ENCODE measurements at regions of chr22 and their contacts with region 1.

Region 1: GRCh38 chr22:28930357-28931007 is 47.1 kb downstream of the ZNRF3 start:
- DNase-seq: no peak
- ATAC-seq: peak; percentile 84
- H3K4me3 ChIP-seq: no peak overlapping the region
- H3K27ac ChIP-seq: no peak overlapping the region
- H3K4me1 ChIP-seq: no peaks in the 10 kb centered on the region; the same call in 1 of the 2 replicates
- H3K27me3 ChIP-seq: peaks cover 0 to 6% of the 10 kb centered on the region in 2 experiments; a peak in 1 of 4 replicates
- CTCF ChIP-seq: no peak
- EP300 ChIP-seq: no peak
- POLR2A ChIP-seq: no peak
- RAD21 ChIP-seq: no peak

Region 2: GRCh38 chr22:28829358-28830181 is 100.9 kb before region 1 on chr22:
- CTCF ChIA-PET with region 1: no interaction called
- POLR2A ChIA-PET with region 1: no interaction called
- RAD21 ChIA-PET with region 1: no interaction called
- SMC1A ChIA-PET with region 1: no interaction called
- in situ Hi-C with region 1: no loop called
- intact Hi-C with region 1: no loop called
- DNase-seq: no peak
- ATAC-seq: peak; percentile 90
- H3K4me3 ChIP-seq: no peak overlapping the region
- H3K27ac ChIP-seq: no peak overlapping the region
- H3K4me1 ChIP-seq: peaks cover 4% of the 10 kb centered on the region
- H3K27me3 ChIP-seq: no peaks in the 10 kb centered on the region
- CTCF ChIP-seq: peak; percentile 96 to 98 (median 96)
- EP300 ChIP-seq: no peak
- POLR2A ChIP-seq: no peak
- RAD21 ChIP-seq: peak; percentile 99

Region 3: DNA sequence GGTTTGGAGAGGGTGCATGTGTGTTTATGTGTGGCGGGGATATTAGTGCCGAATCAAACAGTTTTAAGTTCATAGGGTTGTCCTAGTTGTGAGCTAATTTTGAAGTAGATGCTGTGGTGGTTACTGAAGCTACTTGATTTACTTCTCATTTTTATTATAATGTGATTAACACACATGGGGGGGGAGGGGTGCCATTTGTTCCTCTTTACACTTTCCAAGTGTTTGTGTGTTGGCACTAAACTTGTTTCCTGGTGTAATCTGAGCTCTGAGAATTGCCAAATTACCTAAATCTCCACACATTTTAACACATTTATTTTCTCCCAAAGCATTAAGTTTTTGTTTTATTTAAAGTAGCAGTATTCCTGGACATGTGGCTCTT is 13.0 kb after region 1 on chr22:
- CTCF ChIA-PET with region 1: interaction called, 17 read pairs
- POLR2A ChIA-PET with region 1: interaction called, 16 read pairs
- RAD21 ChIA-PET with region 1: interaction called, 20 read pairs
- SMC1A ChIA-PET with region 1: interaction called, 67 read pairs
- in situ Hi-C with region 1: no loop called
- intact Hi-C with region 1: no loop called
- DNase-seq: no peak
- ATAC-seq: no peak
- H3K4me3 ChIP-seq: no peak overlapping the region
- H3K27ac ChIP-seq: no peak overlapping the region
- H3K4me1 ChIP-seq: no peaks in the 10 kb centered on the region
- H3K27me3 ChIP-seq: no peaks in the 10 kb centered on the region
- CTCF ChIP-seq: no peak
- EP300 ChIP-seq: no peak
- POLR2A ChIP-seq: no peak
- RAD21 ChIP-seq: no peak

Region 4: GRCh38 chr22:28951969-28952521 is 21.6 kb after region 1 on chr22:
- CTCF ChIA-PET with region 1: interaction called, 4 read pairs
- POLR2A ChIA-PET with region 1: interaction called, 6 read pairs
- RAD21 ChIA-PET with region 1: interaction called, 12 read pairs
- SMC1A ChIA-PET with region 1: interaction called, 9 read pairs
- in situ Hi-C with region 1: no loop called
- intact Hi-C with region 1: no loop called
- DNase-seq: no peak
- ATAC-seq: no peak
- H3K4me3 ChIP-seq: no peak overlapping the region
- H3K27ac ChIP-seq: no peak overlapping the region
- H3K4me1 ChIP-seq: peaks cover 17% of the 10 kb centered on the region
- H3K27me3 ChIP-seq: peaks cover 0 to 2% of the 10 kb centered on the region in 2 experiments; a peak in 1 of 4 replicates
- CTCF ChIP-seq: no peak
- EP300 ChIP-seq: no peak
- POLR2A ChIP-seq: no peak
- RAD21 ChIP-seq: no peak

Region 5: DNA sequence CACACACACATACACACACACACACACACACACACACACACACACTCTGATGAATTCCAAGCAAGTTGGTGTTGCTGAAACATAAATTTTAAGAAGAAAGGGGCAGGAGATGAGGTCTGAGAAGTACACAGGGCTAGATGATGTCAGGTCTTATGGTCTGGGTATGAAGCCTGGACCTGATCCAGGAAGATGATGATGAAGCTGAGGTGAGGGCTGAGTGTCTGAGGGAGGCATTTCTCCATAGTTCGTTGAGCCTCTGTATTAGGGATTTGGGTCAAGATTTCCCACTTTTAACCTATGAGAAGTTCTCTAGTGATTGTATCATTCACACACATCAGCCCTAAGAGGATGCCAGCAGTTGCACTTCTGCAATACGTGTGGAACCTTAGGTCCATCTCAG is 175.0 kb after region 1 on chr22:
- CTCF ChIA-PET with region 1: no interaction called
- POLR2A ChIA-PET with region 1: no interaction called
- RAD21 ChIA-PET with region 1: no interaction called
- SMC1A ChIA-PET with region 1: no interaction called
- in situ Hi-C with region 1: no loop called
- intact Hi-C with region 1: no loop called
- DNase-seq: no peak
- ATAC-seq: peak; percentile 76
- H3K4me3 ChIP-seq: no peak overlapping the region
- H3K27ac ChIP-seq: no peak overlapping the region
- H3K4me1 ChIP-seq: no peaks in the 10 kb centered on the region
- H3K27me3 ChIP-seq: no peaks in the 10 kb centered on the region
- CTCF ChIP-seq: no peak
- EP300 ChIP-seq: no peak
- POLR2A ChIP-seq: no peak
- RAD21 ChIP-seq: no peak

Measured in GM12878 (cell line).